ENCODE measurements at regions of chr14 and their contacts with region 1.

Region 1: DNA sequence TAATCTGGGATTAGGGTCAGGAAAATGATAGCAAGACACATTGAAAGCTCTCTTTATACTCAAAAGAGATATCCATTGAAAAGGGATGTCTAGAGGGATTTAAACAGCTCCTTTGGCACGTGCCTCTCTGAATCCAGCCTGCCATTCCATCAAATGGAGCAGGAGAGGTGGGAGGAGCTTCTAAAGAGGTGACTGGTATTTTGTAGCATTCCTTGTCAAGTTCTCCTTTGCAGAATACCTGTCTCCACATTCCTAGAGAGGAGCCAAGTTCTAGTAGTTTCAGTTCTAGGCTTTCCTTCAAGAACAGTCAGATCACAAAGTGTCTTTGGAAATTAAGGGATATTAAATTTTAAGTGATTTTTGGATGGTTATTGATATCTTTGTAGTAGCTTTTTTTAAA is 25.4 kb upstream of the PLEKHD1 start:
- DNase-seq: no peak
- H3K4me3 ChIP-seq: no peak overlapping the region
- H3K27ac ChIP-seq: no peak overlapping the region
- H3K4me1 ChIP-seq: no peaks in the 10 kb centered on the region
- H3K27me3 ChIP-seq: no peaks in the 10 kb centered on the region
- CTCF ChIP-seq: no peak

Region 2: DNA sequence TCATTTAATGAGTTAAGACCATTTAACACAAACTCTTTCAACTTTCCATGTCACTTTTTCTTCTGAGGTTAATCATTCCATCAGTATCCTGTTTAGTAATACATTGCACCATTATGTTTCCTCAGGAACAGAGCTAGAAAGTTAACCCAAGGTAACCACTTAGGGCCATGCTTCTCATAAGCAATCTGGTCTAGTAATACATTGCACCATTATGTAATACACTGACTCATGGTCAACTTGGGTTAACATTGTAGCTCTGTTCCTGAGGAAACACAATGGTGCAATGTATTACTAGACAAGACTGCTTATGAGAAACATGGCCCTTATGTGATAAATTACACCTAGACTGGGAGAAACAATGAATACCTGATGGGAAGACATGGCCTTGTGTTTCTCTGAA is 82.7 kb before region 1 on chr14:
- dilution Hi-C with region 1: loop called (anchors 5 kb)
- DNase-seq: no peak
- H3K4me3 ChIP-seq: no peak overlapping the region
- H3K27ac ChIP-seq: no peak overlapping the region
- H3K4me1 ChIP-seq: no peaks in the 10 kb centered on the region
- H3K27me3 ChIP-seq: no peaks in the 10 kb centered on the region
- CTCF ChIP-seq: no peak

Region 3: GRCh38 chr14:69423279-69423678 is 35.8 kb before region 1 on chr14:
- dilution Hi-C with region 1: no loop called
- DNase-seq: no peak
- H3K4me3 ChIP-seq: no peak overlapping the region
- H3K27ac ChIP-seq: no peak overlapping the region
- H3K4me1 ChIP-seq: peaks cover 6% of the 10 kb centered on the region
- H3K27me3 ChIP-seq: no peaks in the 10 kb centered on the region
- CTCF ChIP-seq: no peak

Region 4: DNA sequence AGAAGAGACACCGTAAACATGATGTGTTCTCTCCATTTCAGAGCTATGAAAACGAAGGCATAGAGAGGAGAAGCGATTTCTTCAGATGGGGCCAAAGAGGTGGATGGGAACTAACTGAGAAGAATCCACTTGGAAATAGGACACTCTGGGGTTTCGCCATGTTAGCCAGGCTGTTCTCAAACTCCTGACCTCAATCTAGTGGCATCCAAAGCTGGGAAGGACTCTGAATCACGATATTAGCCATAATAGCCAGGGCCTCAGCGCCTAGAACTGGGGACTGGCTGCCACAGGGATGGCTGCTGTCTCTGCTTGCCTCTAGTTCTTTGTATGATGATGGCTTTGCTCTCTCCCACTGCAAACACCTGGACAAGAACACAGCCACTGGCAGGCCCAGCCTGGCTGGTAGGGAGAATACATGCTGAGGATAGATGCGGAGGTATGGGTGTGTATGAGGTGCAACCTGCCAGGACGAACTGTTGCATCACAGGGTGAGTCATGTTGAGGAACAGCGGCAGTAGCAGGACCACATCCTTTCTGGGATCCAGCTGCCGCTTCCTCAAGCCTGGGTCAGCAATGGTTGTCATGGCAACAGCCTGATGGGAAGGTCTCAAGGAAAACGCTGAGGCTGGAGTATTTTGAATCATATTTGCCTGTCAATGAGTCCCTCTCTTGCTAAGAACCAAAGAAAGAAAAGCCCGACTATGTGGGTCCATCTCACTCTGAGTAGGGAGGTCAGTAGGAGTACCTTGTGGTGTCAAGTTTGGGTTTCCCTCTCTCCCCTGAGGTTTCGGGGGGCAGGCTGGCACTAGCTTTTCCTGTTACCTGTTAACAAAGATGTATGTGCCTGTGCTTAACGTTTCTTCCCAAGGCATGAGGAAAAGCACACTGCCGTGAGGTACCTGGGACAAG is 84.5 kb after region 1 on chr14:
- dilution Hi-C with region 1: no loop called
- DNase-seq: peak; percentile 85
- H3K4me3 ChIP-seq: no peak overlapping the region
- H3K27ac ChIP-seq: no peak overlapping the region
- H3K4me1 ChIP-seq: peaks cover 4% of the 10 kb centered on the region
- H3K27me3 ChIP-seq: peaks cover 11% of the 10 kb centered on the region
- CTCF ChIP-seq: no peak

Measured in keratinocyte (primary cell).